ENCODE measurements at regions of chr4 and their contacts with region 1.

Region 1: DNA sequence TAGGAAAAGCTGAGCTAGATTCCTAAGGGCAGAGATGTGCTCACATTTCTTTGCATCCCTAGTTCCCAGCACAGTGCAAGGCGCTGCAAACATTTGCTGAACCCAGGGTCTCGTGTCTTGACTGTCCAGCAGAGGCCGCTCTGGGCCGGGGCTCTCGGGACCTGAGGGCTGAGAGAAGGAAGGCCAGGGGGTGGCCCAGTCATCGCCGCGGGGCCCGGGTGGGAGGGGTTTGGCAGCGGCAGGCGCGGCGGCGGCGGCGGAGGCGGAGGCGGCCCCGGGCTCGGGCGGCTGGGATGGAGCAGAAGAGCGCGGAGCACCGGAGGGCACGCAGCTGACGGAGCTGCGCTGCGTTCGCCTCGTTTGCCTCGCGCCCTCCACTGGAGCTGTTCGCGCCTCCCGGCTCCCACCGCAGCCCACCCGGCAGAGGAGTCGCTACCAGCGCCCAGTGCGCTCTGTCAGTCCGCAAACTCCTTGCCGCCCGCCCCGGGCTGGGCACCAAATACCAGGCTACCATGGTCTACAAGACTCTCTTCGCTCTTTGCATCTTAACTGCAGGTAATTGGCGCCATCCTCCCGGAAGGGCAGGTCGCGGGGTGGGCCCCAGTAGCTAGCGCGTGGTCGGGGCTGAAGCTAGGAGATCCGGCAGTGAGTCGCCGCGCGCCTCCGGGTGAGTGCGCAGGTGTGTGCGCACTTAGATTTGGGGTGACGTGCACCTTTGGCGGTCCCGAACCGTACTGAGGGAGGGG is at the start of gene PARM1:
- DNase-seq: peak; percentile 77
- ATAC-seq: peak; percentile 89
- H3K4me3 Mint-ChIP-seq: peak within 1 kb of the TSS; percentile 91
- H3K27ac Mint-ChIP-seq: peak within 1 kb of the TSS; percentile 82
- H3K4me1 Mint-ChIP-seq: peaks cover 40% of the 10 kb centered on the region
- H3K27me3 Mint-ChIP-seq: peaks cover 7% of the 10 kb centered on the region
- CTCF ChIP-seq: no peak
- total RNA-seq, gene PARM1: 6.5 and 6.7 TPM in 2 replicates

Region 2: GRCh38 chr4:74197080-74197479 is 735.9 kb before region 1 on chr4:
- CTCF ChIA-PET with region 1: no interaction called
- POLR2A ChIA-PET with region 1: no interaction called
- intact Hi-C with region 1: no loop called
- DNase-seq: no peak
- ATAC-seq: no peak
- H3K4me3 Mint-ChIP-seq: no peak overlapping the region
- H3K27ac Mint-ChIP-seq: no peak overlapping the region
- H3K4me1 Mint-ChIP-seq: peaks cover 5% of the 10 kb centered on the region
- H3K27me3 Mint-ChIP-seq: no peaks in the 10 kb centered on the region
- CTCF ChIP-seq: no peak

Region 3: DNA sequence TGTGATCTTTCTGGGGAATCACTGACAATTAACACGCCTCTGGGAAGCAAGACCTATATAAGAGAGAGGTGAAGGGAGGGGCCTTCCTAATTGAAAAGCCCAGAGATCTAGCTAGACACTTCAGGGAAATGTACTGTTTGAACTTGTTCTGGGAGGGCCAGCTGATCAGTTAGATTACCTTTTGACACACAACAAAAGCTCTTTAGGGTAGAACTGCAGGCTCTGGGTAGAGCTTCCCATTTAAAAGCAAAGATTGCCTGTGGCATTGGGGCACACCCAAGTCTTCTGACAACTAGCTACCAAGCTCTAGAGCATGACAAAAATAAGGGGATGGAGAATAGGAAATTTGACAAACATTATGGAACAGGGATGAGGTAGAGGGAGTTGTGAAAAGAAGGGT is 461.7 kb before region 1 on chr4:
- CTCF ChIA-PET with region 1: no interaction called
- POLR2A ChIA-PET with region 1: no interaction called
- intact Hi-C with region 1: no loop called
- DNase-seq: no peak
- ATAC-seq: no peak
- H3K4me3 Mint-ChIP-seq: no peak overlapping the region
- H3K27ac Mint-ChIP-seq: no peak overlapping the region
- H3K4me1 Mint-ChIP-seq: no peaks in the 10 kb centered on the region
- H3K27me3 Mint-ChIP-seq: peaks cover 16% of the 10 kb centered on the region
- CTCF ChIP-seq: no peak

Region 4: GRCh38 chr4:74874753-74875367 is 58.1 kb before region 1 on chr4:
- CTCF ChIA-PET with region 1: interaction called, 19 read pairs
- POLR2A ChIA-PET with region 1: interaction called, 3 read pairs
- intact Hi-C with region 1: loop called (anchors 1 kb)
- DNase-seq: no peak
- ATAC-seq: peak; percentile 81
- H3K4me3 Mint-ChIP-seq: no peak overlapping the region
- H3K27ac Mint-ChIP-seq: no peak overlapping the region
- H3K4me1 Mint-ChIP-seq: peaks cover 16% of the 10 kb centered on the region
- H3K27me3 Mint-ChIP-seq: peaks cover 9% of the 10 kb centered on the region
- CTCF ChIP-seq: peak; percentile 67

Region 5: GRCh38 chr4:74904509-74905065 is 28.4 kb before region 1 on chr4:
- CTCF ChIA-PET with region 1: no interaction called
- POLR2A ChIA-PET with region 1: no interaction called
- intact Hi-C with region 1: no loop called
- DNase-seq: no peak
- ATAC-seq: no peak
- H3K4me3 Mint-ChIP-seq: no peak overlapping the region
- H3K27ac Mint-ChIP-seq: no peak overlapping the region
- H3K4me1 Mint-ChIP-seq: no peaks in the 10 kb centered on the region
- H3K27me3 Mint-ChIP-seq: peaks cover 2% of the 10 kb centered on the region
- CTCF ChIP-seq: no peak

Region 6: DNA sequence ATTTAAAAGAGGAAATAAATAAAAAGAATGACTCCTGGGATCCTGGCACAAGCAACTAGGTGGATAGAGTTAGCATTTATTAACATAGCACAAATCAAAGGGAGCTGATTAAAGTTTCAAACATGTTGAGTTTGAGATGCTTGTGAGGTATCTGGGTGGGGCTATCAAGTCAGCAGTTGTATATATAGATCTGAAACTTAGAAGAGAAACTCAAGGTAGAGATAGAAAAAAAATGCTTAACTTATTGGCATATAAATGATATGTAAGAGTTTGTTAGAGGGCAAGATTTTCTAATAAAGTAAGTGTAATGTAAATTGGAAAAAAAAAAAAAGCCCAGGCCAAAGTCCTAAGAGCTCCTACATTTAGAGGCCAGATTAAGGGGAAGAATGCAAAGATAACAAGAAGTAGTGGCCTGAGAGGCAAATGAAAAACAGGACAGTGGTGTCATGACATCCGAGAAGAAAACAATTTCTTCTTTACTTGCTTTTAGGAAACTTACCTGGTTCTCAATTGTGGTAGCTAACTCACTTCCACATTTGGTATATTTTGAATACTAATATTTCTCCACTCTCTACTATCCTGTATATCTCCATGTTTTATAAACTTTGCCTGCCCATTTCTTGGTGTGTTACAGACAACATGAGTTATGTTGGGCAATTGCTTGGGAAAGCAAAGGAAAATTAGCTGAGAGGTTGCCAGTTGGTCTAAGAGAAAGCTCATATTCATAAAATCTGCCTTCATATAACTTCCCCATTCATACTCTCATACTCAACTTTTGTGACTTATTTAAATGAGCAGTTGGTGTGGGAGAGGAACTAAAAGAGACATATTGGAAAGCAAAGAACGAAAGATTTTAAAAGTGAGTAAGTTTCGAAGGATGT is 169.2 kb after region 1 on chr4:
- CTCF ChIA-PET with region 1: no interaction called
- POLR2A ChIA-PET with region 1: interaction called, 7 read pairs
- intact Hi-C with region 1: loop called (anchors 5 kb)
- DNase-seq: no peak
- ATAC-seq: peak; percentile 56
- H3K4me3 Mint-ChIP-seq: peak overlapping the region; percentile 49
- H3K27ac Mint-ChIP-seq: peak overlapping the region; percentile 87
- H3K4me1 Mint-ChIP-seq: peaks cover 58% of the 10 kb centered on the region
- H3K27me3 Mint-ChIP-seq: no peaks in the 10 kb centered on the region
- CTCF ChIP-seq: no peak

Region 7: GRCh38 chr4:75172551-75172950 is 239.6 kb after region 1 on chr4:
- CTCF ChIA-PET with region 1: interaction called, 3 read pairs
- POLR2A ChIA-PET with region 1: no interaction called
- intact Hi-C with region 1: loop called (anchors 2 kb)
- DNase-seq: no peak
- ATAC-seq: peak; percentile 89
- H3K4me3 Mint-ChIP-seq: no peak overlapping the region
- H3K27ac Mint-ChIP-seq: peak overlapping the region; percentile 54
- H3K4me1 Mint-ChIP-seq: peaks cover 17% of the 10 kb centered on the region
- H3K27me3 Mint-ChIP-seq: no peaks in the 10 kb centered on the region
- CTCF ChIP-seq: no peak

Region 8: GRCh38 chr4:75469896-75470295 is 536.9 kb after region 1 on chr4:
- CTCF ChIA-PET with region 1: no interaction called
- POLR2A ChIA-PET with region 1: no interaction called
- intact Hi-C with region 1: loop called (anchors 5 kb)
- DNase-seq: no peak
- ATAC-seq: no peak
- H3K4me3 Mint-ChIP-seq: no peak overlapping the region
- H3K27ac Mint-ChIP-seq: no peak overlapping the region
- H3K4me1 Mint-ChIP-seq: no peaks in the 10 kb centered on the region
- H3K27me3 Mint-ChIP-seq: no peaks in the 10 kb centered on the region
- CTCF ChIP-seq: no peak

Region 9: DNA sequence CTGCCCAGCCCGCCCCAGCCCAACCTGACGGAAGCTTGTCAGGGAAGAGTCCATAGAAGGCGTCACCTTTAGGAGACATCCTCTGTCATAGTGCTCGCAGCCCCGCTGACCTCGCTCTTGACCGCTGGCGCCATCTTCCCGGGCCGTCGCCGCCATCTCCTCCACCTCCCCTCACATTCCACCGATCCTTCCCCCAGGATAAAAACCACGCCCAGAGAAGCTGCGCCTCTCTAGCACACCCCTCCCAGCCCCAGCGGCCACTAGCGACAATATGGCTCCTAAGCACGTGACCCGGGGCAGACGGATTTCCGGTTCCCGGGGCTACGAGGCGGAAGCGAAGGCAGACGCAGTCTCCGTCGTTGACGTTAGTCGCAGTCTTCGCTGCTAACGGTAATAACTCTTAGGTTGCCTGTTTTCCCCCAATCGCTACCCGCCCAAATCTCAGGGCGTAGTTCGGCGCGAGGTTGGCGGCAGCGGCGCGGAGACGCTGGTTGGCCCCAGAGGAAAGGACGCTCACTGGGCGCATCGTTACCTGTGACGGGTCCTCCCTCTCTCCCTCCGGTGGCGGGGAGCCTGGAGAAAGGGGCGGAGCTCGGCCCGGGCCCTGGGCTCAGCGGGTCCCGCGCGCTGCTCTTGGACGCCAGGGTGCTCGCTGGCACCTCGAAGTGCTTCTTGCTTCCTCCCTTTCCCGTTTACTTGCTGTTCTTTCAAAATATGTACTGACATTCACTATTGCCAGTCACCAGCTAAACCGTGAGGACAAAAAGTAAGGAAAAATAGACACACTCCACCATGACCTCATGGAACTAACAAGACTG is 581.4 kb after region 1 on chr4 and contains the starts of genes RCHY1 and THAP6:
- CTCF ChIA-PET with region 1: interaction called, 4 read pairs
- POLR2A ChIA-PET with region 1: interaction called, 7 read pairs
- intact Hi-C with region 1: loop called (anchors 2 kb)
- DNase-seq: peak; percentile 88
- ATAC-seq: peak; percentile 87
- H3K4me3 Mint-ChIP-seq: no peak within 1 kb of the TSS
- H3K27ac Mint-ChIP-seq: peak within 1 kb of the TSS; percentile 95
- H3K4me1 Mint-ChIP-seq: peaks cover 39% of the 10 kb centered on the region
- H3K27me3 Mint-ChIP-seq: no peaks in the 10 kb centered on the region
- CTCF ChIP-seq: no peak
- total RNA-seq, gene RCHY1: 28.5 and 29.6 TPM in 2 replicates
- total RNA-seq, gene THAP6: 17.4 and 24.6 TPM in 2 replicates

Measured in activated B cell treated with CpG ODN at 0.5 μM for 24 hours (primary cell).